ENCODE measurements at regions of chr6 and their contacts with region 1.

Region 1: DNA sequence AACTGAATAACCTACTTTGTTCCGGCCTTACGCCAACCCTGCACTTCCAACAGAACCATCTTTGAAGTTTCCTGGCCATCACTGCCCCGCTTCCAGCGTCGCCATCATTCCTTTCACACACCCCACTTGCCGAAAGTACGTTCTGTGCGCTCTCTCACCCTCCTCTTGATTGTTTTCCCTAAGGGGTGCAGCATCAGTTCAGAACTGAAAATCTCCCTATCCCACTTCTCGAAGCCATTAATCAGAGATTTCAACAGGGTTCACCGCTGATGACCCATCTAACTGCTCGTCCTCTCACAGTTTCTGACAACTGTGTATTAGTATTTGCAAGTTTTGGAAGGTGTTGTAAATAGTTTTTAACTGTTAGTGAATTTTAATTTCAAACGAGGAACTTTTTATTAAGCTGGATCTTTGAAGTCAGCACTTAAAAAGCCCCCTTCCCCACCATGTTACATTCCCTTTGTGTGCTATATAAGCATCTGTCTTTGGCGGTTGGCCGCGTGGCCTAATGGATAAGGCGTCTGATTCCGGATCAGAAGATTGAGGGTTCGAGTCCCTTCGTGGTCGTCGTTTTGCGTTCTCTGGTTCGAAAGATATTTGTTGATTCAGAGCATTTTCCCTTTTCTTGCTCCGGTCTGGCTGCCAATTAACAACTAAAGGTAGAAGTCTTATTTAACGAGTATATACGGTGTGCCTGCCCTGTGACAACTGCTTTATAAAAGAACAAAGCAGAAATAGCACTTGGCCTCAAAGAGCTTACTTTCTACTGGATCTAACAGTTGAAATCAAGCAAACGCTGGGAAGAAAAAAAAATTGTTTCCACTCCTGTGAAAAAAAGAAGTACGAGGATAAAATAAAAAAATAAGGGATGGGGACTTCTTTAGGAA is 42.6 kb downstream of the TRIM27 start:
- DNase-seq: peak; percentile 76 to 88
- ATAC-seq: peak; percentile 89
- H3K4me3 ChIP-seq: peak overlapping the region; percentile 77 to 95
- H3K27ac ChIP-seq: peak overlapping the region in 1 of 2 donors; percentile 39
- H3K4me1 ChIP-seq: peaks cover 0 to 3% of the 10 kb centered on the region in 2 donors
- H3K27me3 ChIP-seq: no peaks in the 10 kb centered on the region

Region 2: DNA sequence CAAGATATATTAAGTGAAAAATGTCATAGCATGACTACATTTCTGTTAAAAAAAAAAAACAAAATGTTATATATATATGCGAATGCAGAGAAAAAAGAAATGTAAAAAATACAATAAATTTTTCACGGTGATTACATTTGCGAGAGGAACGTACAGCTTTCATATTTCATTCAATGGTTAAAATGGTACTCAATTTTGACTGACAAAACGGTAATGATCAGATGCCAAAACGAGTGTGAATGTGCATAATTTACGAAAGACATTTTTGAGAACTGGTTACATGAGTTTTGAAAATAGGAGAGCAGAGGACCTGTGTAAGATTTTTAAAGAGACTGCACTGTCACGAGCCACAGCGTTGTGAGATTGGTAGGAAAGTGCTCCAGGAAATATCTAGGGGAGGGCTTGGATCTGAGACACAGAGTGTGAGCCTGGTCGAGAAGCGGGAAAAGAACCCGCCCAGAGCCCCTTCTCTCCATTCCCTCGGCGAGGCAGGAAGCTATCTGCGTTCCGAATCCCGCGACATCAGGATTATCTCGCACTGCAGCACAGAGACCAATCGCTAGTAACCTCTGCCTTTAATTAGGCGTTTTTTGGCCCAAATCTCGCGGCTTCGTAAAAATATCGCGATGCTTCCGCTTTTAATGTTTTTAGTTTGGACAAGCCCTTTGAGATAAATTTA is 14.1 kb after region 1 on chr6:
- intact Hi-C with region 1: loop called in 1 of 2 experiments (anchors 2 kb)
- DNase-seq: peak; percentile 94 to 96
- ATAC-seq: peak; percentile 96
- H3K4me3 ChIP-seq: peak overlapping the region; percentile 52 to 96
- H3K27ac ChIP-seq: peak overlapping the region; percentile 9 to 95
- H3K4me1 ChIP-seq: no peaks in the 10 kb centered on the region
- H3K27me3 ChIP-seq: no peaks in the 10 kb centered on the region

Measured in aorta (tissue), 5 donors.